Psoas muscle (tissue), 8 donors: ENCODE measurements at regions of chr2 and their contacts with region 1.

Region 1: GRCh38 chr2:23760736-23761135 is 166.2 kb downstream of the ATAD2B start:
- DNase-seq: no peak
- ATAC-seq: peak in 3 of 4 donors; percentile 27 to 63 (median 37)
- H3K4me3 ChIP-seq: no peak overlapping the region
- H3K27ac ChIP-seq: no peak overlapping the region
- H3K4me1 ChIP-seq: peaks cover 25% of the 10 kb centered on the region
- H3K27me3 ChIP-seq: no peaks in the 10 kb centered on the region
- CTCF ChIP-seq: peak; percentile 51

Region 2: GRCh38 chr2:23414871-23415270 is 345.9 kb before region 1 on chr2:
- intact Hi-C with region 1: loop called in 1 of 2 experiments (anchors 10 kb)
- DNase-seq: no peak
- ATAC-seq: peak in 1 of 4 donors; percentile 26
- H3K4me3 ChIP-seq: no peak overlapping the region
- H3K27ac ChIP-seq: no peak overlapping the region
- H3K4me1 ChIP-seq: peaks cover 5% of the 10 kb centered on the region
- H3K27me3 ChIP-seq: no peaks in the 10 kb centered on the region
- CTCF ChIP-seq: no peak

Region 3: GRCh38 chr2:23636426-23636825 is 124.3 kb before region 1 on chr2:
- intact Hi-C with region 1: loop called in 1 of 2 experiments (anchors 5 kb)
- DNase-seq: peak; percentile 37 to 63
- ATAC-seq: peak; percentile 54 to 75 (median 67)
- H3K4me3 ChIP-seq: no peak overlapping the region
- H3K27ac ChIP-seq: peak overlapping the region; percentile 30
- H3K4me1 ChIP-seq: peaks cover 6% of the 10 kb centered on the region
- H3K27me3 ChIP-seq: no peaks in the 10 kb centered on the region
- CTCF ChIP-seq: peak; percentile 27

Region 4: GRCh38 chr2:23745068-23745725 is 15.5 kb before region 1 on chr2:
- intact Hi-C with region 1: no loop called
- DNase-seq: peak; percentile 61 to 87
- ATAC-seq: peak; percentile 48 to 78 (median 72)
- H3K4me3 ChIP-seq: no peak overlapping the region
- H3K27ac ChIP-seq: peak overlapping the region; percentile 83
- H3K4me1 ChIP-seq: peaks cover 18% of the 10 kb centered on the region
- H3K27me3 ChIP-seq: no peaks in the 10 kb centered on the region
- CTCF ChIP-seq: no peak